CD4-positive, alpha-beta T cell (primary cell): ENCODE measurements at regions of chr9 and their contacts with region 1.

Region 1: GRCh38 chr9:37119907-37120842 is at the start of gene ZCCHC7:
- DNase-seq: peak; percentile 95 to 98 (median 97)
- ATAC-seq: peak; percentile 95
- H3K4me3 ChIP-seq: peak within 1 kb of the TSS; percentile 79
- H3K4me3 Mint-ChIP-seq: peak within 1 kb of the TSS; percentile 95
- H3K27ac ChIP-seq: peak within 1 kb of the TSS; percentile 87 to 94
- H3K27ac Mint-ChIP-seq: peak within 1 kb of the TSS; percentile 92
- H3K4me1 ChIP-seq: peaks cover 21% of the 10 kb centered on the region
- H3K4me1 Mint-ChIP-seq: peaks cover 42% of the 10 kb centered on the region
- H3K27me3 ChIP-seq: no peaks in the 10 kb centered on the region
- H3K27me3 Mint-ChIP-seq: no peaks in the 10 kb centered on the region
- CTCF ChIP-seq: no peak
- total RNA-seq, gene ZCCHC7: 40.7 to 41.0 TPM

Region 2: DNA sequence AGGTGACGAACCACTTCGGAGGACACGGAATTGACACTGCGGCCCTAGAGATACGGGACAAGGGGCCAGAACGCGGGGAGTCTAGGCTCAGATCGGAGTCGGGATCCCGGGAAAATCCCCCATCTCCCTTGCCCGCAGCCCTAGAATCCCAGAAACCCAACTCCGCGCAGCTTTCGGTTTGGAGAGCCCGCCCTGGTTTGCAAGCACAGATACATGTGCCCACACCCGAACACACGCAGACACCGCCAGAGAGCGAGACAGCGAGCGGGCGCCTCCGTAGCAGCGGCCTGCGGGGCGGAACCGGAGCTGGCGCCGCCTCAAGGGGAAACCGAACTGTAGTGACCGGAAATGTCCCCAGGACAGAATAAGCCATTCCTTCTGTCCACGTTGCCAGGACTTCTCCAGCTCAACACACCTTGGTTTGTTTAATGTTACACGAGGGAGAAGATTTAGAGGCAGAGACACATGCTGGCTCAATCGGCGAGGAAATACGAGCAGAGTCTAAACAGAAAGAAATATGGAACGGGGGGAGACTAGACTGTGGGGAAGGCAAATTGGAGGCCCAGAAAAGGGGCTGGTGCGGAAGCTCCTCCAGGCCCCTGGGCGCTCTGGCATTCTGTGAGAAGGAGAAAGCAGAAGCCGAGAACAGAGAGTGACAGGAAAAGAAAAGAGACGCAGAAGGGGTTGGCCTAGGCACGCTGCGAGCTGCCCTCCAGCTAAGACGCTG is 83.2 kb before region 1 on chr9:
- CTCF ChIA-PET with region 1: no interaction called
- POLR2A ChIA-PET with region 1: interaction called, 4 read pairs
- intact Hi-C with region 1: loop called (anchors 5 kb)
- DNase-seq: peak in 6 of 14 experiments; percentile 20 to 73 (median 54)
- ATAC-seq: peak; percentile 72
- H3K4me3 ChIP-seq: peak overlapping the region; percentile 60
- H3K4me3 Mint-ChIP-seq: peak overlapping the region; percentile 66
- H3K27ac ChIP-seq: no peak overlapping the region
- H3K27ac Mint-ChIP-seq: no peak overlapping the region
- H3K4me1 ChIP-seq: peaks cover 48% of the 10 kb centered on the region
- H3K4me1 Mint-ChIP-seq: peaks cover 38% of the 10 kb centered on the region
- H3K27me3 ChIP-seq: peaks cover 79 to 86% of the 10 kb centered on the region in 2 experiments
- H3K27me3 Mint-ChIP-seq: peaks cover 97% of the 10 kb centered on the region
- CTCF ChIP-seq: no peak

Region 3: GRCh38 chr9:37066139-37066725 is 53.9 kb before region 1 on chr9:
- CTCF ChIA-PET with region 1: no interaction called
- POLR2A ChIA-PET with region 1: no interaction called
- intact Hi-C with region 1: no loop called
- DNase-seq: no peak
- ATAC-seq: no peak
- H3K4me3 ChIP-seq: no peak overlapping the region
- H3K4me3 Mint-ChIP-seq: no peak overlapping the region
- H3K27ac ChIP-seq: no peak overlapping the region
- H3K27ac Mint-ChIP-seq: no peak overlapping the region
- H3K4me1 ChIP-seq: no peaks in the 10 kb centered on the region
- H3K4me1 Mint-ChIP-seq: no peaks in the 10 kb centered on the region
- H3K27me3 ChIP-seq: peaks cover 0 to 16% of the 10 kb centered on the region in 2 experiments
- H3K27me3 Mint-ChIP-seq: peaks cover 41% of the 10 kb centered on the region
- CTCF ChIP-seq: no peak

Region 4: GRCh38 chr9:37079370-37080164 is 40.6 kb before region 1 on chr9:
- CTCF ChIA-PET with region 1: interaction called, 4 read pairs
- POLR2A ChIA-PET with region 1: interaction called, 107 read pairs
- intact Hi-C with region 1: loop called (anchors 1 kb)
- DNase-seq: peak; percentile 85 to 98 (median 90)
- ATAC-seq: peak; percentile 96
- H3K4me3 ChIP-seq: peak overlapping the region; percentile 75
- H3K4me3 Mint-ChIP-seq: peak overlapping the region; percentile 97
- H3K27ac ChIP-seq: peak overlapping the region; percentile 67 to 93
- H3K27ac Mint-ChIP-seq: peak overlapping the region; percentile 93
- H3K4me1 ChIP-seq: peaks cover 19% of the 10 kb centered on the region
- H3K4me1 Mint-ChIP-seq: peaks cover 53% of the 10 kb centered on the region
- H3K27me3 ChIP-seq: no peaks in the 10 kb centered on the region
- H3K27me3 Mint-ChIP-seq: no peaks in the 10 kb centered on the region
- CTCF ChIP-seq: no peak